ENCODE measurements at regions of chr5 and their contacts with region 1.

Region 1: GRCh38 chr5:16552666-16553343 is 64.0 kb downstream of the RETREG1 start:
- DNase-seq: peak; percentile 78
- ATAC-seq: peak; percentile 86 to 91

Region 2: GRCh38 chr5:16510121-16510520 is 42.7 kb before region 1 on chr5:
- intact Hi-C with region 1: no loop called
- DNase-seq: no peak
- ATAC-seq: no peak

Region 3: GRCh38 chr5:16616536-16617273 is 63.9 kb after region 1 on chr5 and contains the start of gene RETREG1:
- intact Hi-C with region 1: loop called in 1 of 2 experiments (anchors 5 kb)
- DNase-seq: peak; percentile 82
- ATAC-seq: peak; percentile 93 to 95
- total RNA-seq, gene RETREG1: 114 to 145 TPM

Region 4: DNA sequence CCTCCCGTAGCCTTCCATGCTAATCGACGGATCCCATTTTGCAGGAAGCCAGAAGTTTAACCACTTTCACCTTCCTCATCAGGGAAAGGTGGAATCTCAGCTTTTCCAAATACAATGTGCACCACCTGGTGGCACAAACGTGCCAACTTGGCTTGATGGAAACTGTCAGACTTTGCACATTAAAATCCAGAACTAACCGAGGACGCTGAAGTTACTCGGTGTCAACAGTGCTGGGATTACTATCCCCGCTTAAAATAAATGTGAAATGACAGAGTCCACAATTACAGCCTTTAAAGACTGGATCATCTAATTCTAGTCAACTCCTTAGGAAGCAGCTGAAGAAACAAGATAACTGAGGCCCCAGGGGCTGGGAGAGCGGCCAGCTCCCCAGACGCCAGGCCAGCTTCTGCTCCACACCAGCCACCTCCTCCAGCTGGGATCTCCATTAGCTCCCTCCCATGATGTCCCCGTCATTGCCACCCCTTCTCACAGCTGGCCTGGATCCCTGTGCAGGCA is 114.1 kb after region 1 on chr5:
- intact Hi-C with region 1: loop called in 1 of 2 experiments (anchors 10 kb)
- DNase-seq: peak; percentile 61
- ATAC-seq: peak; percentile 81 to 91